Calu3 (cell line): ENCODE measurements at regions of chr9 and their contacts with region 1.

Region 1: GRCh38 chr9:104868687-104869404 is 59.1 kb downstream of the ABCA1 start:
- DNase-seq: peak; percentile 43
- H3K4me3 Mint-ChIP-seq: no peak overlapping the region
- H3K27ac Mint-ChIP-seq: no peak overlapping the region
- H3K4me1 Mint-ChIP-seq: peaks cover 9% of the 10 kb centered on the region
- H3K27me3 Mint-ChIP-seq: no peaks in the 10 kb centered on the region
- CTCF ChIP-seq: no peak

Region 2: GRCh38 chr9:104177003-104177611 is 691.7 kb before region 1 on chr9:
- CTCF ChIA-PET with region 1: no interaction called
- intact Hi-C with region 1: no loop called
- DNase-seq: no peak
- H3K4me3 Mint-ChIP-seq: no peak overlapping the region
- H3K27ac Mint-ChIP-seq: no peak overlapping the region
- H3K4me1 Mint-ChIP-seq: no peaks in the 10 kb centered on the region
- H3K27me3 Mint-ChIP-seq: no peaks in the 10 kb centered on the region
- CTCF ChIP-seq: no peak

Region 3: GRCh38 chr9:104854613-104855012 is 14.2 kb before region 1 on chr9:
- CTCF ChIA-PET with region 1: interaction called, 11 read pairs
- intact Hi-C with region 1: no loop called
- DNase-seq: no peak
- H3K4me3 Mint-ChIP-seq: no peak overlapping the region
- H3K27ac Mint-ChIP-seq: peak overlapping the region; percentile 44
- H3K4me1 Mint-ChIP-seq: peaks cover 35% of the 10 kb centered on the region
- H3K27me3 Mint-ChIP-seq: no peaks in the 10 kb centered on the region
- CTCF ChIP-seq: no peak

Region 4: DNA sequence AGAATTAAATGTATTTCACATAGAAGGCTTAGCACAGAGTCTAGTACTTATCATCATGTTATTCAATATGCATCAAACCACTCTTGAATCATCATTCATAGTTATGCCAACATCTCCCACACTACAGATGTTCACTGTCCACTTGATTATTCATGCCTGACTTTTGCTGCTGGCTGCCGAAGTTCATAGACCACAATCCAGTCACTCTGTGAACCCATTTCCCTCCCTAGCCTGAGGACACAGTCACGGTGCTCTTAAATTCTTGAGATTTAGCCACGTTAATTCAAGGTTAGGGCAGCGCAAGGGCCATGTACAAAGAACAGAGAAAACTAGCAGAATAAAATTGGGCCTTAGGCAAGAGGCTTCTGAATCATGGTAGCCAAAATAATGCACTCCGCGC is 26.7 kb after region 1 on chr9:
- CTCF ChIA-PET with region 1: interaction called, 12 read pairs
- intact Hi-C with region 1: no loop called
- DNase-seq: no peak
- H3K4me3 Mint-ChIP-seq: no peak overlapping the region
- H3K27ac Mint-ChIP-seq: no peak overlapping the region
- H3K4me1 Mint-ChIP-seq: no peaks in the 10 kb centered on the region
- H3K27me3 Mint-ChIP-seq: no peaks in the 10 kb centered on the region
- CTCF ChIP-seq: no peak

Region 5: GRCh38 chr9:104906441-104907277 is 37.8 kb after region 1 on chr9:
- CTCF ChIA-PET with region 1: no interaction called
- intact Hi-C with region 1: no loop called
- DNase-seq: no peak
- H3K4me3 Mint-ChIP-seq: no peak overlapping the region
- H3K27ac Mint-ChIP-seq: no peak overlapping the region
- H3K4me1 Mint-ChIP-seq: no peaks in the 10 kb centered on the region
- H3K27me3 Mint-ChIP-seq: peaks cover 18% of the 10 kb centered on the region
- CTCF ChIP-seq: no peak